MCF 10A (cell line): ENCODE measurements at regions of chr2 and their contacts with region 1.

Region 1: DNA sequence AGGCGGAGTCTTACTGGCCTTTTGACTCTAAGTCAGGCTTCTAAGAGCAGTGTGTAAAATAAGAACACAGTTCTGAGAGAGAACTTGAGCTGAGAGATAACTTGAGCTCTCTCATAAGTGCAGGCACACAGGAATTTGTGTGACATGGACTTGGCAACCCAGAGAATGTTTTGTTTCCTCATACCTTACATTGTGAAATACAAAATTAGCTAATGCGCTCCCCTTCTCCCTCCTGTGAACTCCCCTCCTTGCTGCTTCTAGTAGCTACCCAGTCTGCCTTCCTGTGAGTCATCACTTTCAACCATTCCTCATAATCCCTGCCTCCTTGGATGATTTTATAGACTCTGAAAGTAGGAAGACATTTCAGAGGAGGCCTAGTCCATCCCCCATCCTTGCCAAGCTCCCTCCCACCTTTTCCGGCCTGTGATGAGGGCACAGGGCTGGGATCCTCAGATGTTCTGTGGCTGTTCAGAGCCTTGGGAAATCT is 22.6 kb downstream of the FER1L5 start:
- DNase-seq: peak; percentile 99
- H3K4me3 Mint-ChIP-seq: peak overlapping the region; percentile 2
- H3K27ac Mint-ChIP-seq: peak overlapping the region; percentile 4
- H3K4me1 Mint-ChIP-seq: no peaks in the 10 kb centered on the region
- H3K27me3 Mint-ChIP-seq: no peaks in the 10 kb centered on the region
- CTCF ChIP-seq: no peak

Region 2: DNA sequence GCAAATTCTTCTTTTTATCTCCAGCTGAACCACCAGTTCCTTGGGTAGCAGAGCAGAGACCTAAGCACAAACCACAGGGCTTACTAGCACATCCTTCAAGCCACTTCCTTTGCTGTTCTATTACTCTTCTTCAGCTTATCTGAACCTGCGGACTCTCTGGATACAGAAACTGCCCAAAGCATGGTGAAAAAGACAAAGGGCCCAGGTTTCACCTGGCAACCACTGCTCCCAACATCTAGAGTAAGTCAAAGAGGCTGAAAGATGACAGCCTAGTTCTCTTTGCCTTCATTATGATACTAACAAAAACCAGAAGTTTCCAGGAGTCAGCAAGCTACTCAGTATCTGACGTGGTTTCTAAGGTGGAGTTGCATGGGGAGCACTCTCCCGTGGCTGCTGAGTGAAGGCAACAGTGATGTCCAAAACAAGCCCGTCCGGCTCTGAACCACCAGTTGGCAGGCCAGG is 70.4 kb before region 1 on chr2:
- CTCF ChIA-PET with region 1: no interaction called
- POLR2A ChIA-PET with region 1: no interaction called
- intact Hi-C with region 1: no loop called
- DNase-seq: no peak
- H3K4me3 Mint-ChIP-seq: no peak overlapping the region
- H3K27ac Mint-ChIP-seq: no peak overlapping the region
- H3K4me1 Mint-ChIP-seq: peaks cover 5% of the 10 kb centered on the region
- H3K27me3 Mint-ChIP-seq: no peaks in the 10 kb centered on the region
- CTCF ChIP-seq: no peak

Region 3: DNA sequence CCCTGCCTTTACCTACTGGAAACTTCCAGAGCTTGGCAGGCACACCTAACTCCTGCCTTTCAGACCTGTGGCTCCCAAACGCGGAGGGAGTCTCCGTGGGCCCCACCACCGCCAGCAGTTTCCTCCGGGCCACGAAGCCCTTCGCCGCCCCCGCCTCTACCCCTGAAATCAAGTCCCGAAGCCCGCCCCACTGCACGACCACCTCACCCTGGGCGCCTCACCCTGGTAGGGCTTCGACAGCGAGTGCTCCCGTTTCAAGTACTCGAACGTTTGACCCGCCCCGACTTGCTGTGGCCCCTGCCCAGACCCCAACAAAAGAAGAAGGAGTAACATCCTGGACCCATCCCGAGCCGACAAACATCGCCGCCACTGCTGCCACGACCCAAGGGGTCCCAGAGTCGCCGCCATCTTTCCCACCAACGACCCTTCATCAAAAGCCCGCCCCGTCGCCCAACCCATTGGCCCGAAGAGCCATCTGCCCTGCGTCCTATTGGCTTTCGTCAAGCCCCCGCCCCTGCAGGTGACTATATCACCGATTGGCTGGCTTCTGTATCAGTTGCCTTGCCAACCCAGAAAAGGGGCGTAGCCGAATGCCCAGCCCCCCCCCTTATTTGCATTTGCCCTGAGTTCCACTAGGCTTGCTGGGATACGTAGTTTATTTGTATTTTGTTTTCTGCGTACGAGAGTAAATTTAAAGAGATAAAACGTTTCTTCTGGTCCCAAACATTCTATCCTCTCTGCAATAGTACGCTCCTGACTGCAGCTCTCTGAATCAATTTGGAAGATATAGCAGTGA is 74.7 kb after region 1 on chr2 and contains the start of gene LMAN2L:
- CTCF ChIA-PET with region 1: no interaction called
- POLR2A ChIA-PET with region 1: interaction called, 3 read pairs
- intact Hi-C with region 1: loop called (anchors 10 kb)
- DNase-seq: peak; percentile 98
- H3K4me3 Mint-ChIP-seq: peak within 1 kb of the TSS; percentile 96
- H3K27ac Mint-ChIP-seq: peak within 1 kb of the TSS; percentile 97
- H3K4me1 Mint-ChIP-seq: peaks cover 5% of the 10 kb centered on the region
- H3K27me3 Mint-ChIP-seq: no peaks in the 10 kb centered on the region
- CTCF ChIP-seq: no peak
- total RNA-seq, gene LMAN2L: 6.5 and 7.1 TPM in 2 replicates